Head of caudate nucleus (tissue), 42 donors: ENCODE measurements at regions of chr15 and their contacts with region 1.

Region 1: GRCh38 chr15:92808978-92809879 is 90.9 kb upstream of the CHD2 start:
- DNase-seq: peak; percentile 90 to 99 (median 97)

Region 2: GRCh38 chr15:92881802-92882696 is 72.8 kb after region 1 on chr15:
- intact Hi-C with region 1: loop called (anchors 1 kb)
- DNase-seq: peak; percentile 96 to 100 (median 99)

Region 3: DNA sequence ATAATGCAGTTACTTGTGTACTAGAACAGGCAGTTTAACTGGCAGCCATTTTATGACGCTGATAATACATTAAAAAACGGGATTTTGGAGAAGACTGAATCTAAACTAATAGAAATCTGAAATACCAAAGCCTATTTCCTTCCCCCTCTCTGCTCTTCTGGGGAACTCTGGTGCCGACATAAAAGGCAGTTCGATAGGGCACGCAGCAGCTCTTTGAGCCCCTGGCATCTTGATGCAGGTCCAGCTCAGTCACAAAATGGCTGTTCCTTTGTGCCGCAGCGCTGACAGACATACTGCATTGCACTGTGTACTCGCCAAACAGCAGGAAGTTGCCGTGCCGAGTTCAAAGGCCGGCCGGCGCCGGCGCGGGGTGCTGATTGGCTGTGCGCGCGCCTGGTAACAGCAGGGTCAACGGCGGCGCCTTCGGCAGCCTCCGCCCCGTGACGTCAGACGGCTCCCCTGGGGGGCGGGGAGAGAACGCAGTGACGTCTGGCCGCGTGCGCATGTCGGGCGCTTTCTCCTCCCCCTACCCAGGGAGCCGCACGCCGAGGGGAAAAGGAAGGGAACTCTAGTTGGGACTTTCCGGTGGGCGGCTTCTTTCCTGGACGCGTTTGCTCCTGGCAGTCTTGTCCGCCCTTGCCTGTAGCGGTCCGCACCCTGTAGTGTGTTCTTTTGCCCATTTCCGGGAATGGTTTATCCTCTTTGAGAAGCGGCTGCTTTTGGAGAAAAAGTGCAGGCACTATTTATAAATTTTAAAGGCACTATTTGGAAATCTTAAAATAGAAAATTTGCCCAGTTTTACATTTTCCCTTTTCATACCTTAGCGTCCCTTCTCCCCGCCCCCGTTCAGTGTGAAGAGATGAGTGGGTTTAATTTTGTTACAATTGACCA is 95.0 kb after region 1 on chr15:
- intact Hi-C with region 1: loop called (anchors 5 kb)
- DNase-seq: peak; percentile 97 to 100 (median 99)

Region 4: DNA sequence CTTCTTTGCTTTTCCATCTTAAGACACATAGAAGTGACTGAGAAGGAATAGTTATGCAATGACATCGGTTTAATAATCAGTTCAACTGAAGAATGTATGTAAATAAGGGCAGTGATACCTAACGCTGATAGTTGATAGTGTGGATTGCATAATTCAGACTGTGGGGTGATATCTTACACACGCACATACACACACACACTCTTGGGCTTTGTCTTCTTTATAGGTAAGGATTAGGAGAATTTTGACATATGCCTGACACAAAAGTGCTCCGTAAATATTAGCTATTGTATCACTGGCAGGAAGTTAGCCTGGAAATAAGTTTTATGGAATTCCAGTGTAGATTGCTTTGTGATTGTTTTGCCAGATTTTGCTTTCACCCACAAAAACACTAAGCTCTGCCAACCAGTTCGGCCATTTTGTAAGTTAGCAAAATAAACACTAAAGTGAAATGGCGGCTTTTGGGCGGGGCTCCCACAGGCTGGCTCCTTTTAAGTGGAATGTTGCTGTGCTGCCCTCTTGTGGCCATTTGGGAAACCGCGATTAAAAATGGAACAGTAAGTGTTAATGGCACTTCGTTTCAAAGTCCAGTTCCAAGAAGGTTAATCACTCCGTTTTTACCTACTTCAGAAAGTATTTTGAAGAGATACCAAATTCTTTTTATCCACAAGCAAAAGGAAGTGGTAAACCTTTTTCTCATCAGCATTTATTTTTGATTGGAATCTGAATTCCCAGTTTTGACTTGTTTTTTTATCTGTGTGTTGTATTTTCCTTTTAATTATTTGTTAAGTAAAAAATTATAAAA is 108.6 kb after region 1 on chr15:
- intact Hi-C with region 1: loop called (anchors 2 kb)
- DNase-seq: peak; percentile 62 to 98 (median 91)

Region 5: GRCh38 chr15:93030430-93031105 is 221.3 kb after region 1 on chr15:
- intact Hi-C with region 1: loop called (anchors 10 kb)
- DNase-seq: peak; percentile 55 to 91 (median 80)